CD8-positive, alpha-beta T cell (primary cell): ENCODE measurements at regions of chr20 and their contacts with region 1.

Region 1: DNA sequence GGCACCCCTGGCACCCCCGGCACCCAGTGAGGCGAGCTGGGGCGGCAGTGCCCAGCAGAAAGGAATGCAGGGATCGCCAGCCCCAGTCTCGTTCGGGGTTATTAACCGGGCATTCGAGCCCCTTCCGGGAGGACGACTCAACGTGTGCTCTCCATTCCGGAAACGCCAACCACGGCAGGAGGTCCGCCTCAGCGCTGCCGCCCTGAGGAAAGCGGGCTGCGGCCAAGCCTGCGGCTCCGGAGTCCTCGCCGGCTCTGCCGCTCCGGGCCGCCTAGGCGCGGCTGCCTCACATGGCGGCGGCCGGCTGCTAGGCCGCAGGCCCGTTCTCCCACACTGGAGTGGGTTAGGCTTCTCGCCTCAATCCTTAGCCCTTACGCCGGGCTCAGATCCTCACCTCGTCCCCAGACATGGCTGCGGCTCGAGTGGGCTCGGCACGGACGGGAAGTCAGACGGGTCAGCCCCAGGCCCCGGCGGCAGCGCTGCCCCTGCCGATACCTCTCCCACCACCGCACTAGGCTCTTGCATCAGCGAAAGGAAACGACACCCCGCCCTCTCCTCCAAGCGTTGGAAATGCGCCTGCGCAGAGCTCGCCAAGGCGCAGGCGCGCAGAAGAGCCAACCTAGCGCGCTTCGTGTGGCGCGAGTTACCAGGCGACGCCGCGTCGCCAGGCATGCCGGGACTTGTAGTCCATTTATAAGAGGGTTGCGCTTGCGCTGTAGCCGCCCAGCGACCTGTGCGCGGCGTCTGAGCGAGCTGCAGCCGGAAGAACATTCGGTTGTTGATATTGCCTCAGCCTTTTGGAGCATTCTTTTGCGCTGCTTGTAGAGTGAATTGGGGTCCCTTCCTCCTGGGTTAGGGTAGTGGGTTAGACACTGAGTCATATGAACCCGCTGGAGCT is at the start of gene EIF2S2:
- DNase-seq: peak; percentile 91 to 99 (median 95)
- ATAC-seq: peak; percentile 89
- H3K4me3 ChIP-seq: peak within 1 kb of the TSS; percentile 81 to 86
- H3K4me3 Mint-ChIP-seq: peak within 1 kb of the TSS; percentile 96
- H3K27ac ChIP-seq: peak within 1 kb of the TSS; percentile 89 to 93
- H3K27ac Mint-ChIP-seq: peak within 1 kb of the TSS; percentile 98
- H3K4me1 ChIP-seq: peaks cover 34% of the 10 kb centered on the region
- H3K4me1 Mint-ChIP-seq: peaks cover 42% of the 10 kb centered on the region
- H3K27me3 ChIP-seq: no peaks in the 10 kb centered on the region
- H3K27me3 Mint-ChIP-seq: no peaks in the 10 kb centered on the region
- CTCF ChIP-seq: no peak
- total RNA-seq, gene EIF2S2: 19.4 to 19.6 TPM

Region 2: GRCh38 chr20:32972181-32973076 is 1139.5 kb before region 1 on chr20:
- CTCF ChIA-PET with region 1: no interaction called
- POLR2A ChIA-PET with region 1: no interaction called
- intact Hi-C with region 1: loop called in 1 of 2 experiments (anchors 5 kb)
- DNase-seq: peak; percentile 66 to 97 (median 83)
- ATAC-seq: peak; percentile 69
- H3K4me3 ChIP-seq: peak overlapping the region; percentile 12 to 42
- H3K4me3 Mint-ChIP-seq: no peak overlapping the region
- H3K27ac ChIP-seq: peak overlapping the region; percentile 73 to 95
- H3K27ac Mint-ChIP-seq: no peak overlapping the region
- H3K4me1 ChIP-seq: peaks cover 87% of the 10 kb centered on the region
- H3K4me1 Mint-ChIP-seq: peaks cover 45% of the 10 kb centered on the region
- H3K27me3 ChIP-seq: no peaks in the 10 kb centered on the region
- H3K27me3 Mint-ChIP-seq: no peaks in the 10 kb centered on the region
- CTCF ChIP-seq: no peak

Region 3: DNA sequence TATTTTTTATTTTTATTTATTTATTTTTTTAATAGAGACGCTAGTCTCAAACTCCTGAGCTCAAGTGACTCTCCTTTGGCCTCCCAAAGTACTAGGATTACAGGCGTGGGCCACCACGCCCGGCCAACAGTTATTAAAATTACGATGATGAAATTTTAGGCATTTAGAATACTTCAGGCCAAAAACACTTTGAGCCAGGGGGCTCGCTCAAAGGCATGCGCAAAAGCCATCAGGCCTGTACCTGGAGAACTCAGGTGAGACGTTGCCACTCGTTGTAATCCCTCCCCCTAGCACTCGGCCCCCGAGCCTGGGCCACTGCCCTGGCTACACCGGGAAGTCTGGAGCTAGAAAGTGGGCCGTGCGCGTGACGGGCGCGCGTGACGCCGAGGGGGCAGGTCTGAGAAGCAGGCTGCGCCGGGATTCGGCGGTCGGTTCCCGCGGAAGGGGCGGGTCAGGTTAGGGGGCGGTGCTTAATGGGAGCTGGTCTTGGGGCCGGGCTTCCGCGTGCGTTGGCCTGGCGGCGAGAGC is 622.4 kb before region 1 on chr20:
- CTCF ChIA-PET with region 1: no interaction called
- POLR2A ChIA-PET with region 1: interaction called, 7 read pairs
- intact Hi-C with region 1: loop called (anchors 5 kb)
- DNase-seq: peak; percentile 98 to 99 (median 99)
- ATAC-seq: peak; percentile 94
- H3K4me3 ChIP-seq: peak overlapping the region; percentile 58 to 89
- H3K4me3 Mint-ChIP-seq: peak overlapping the region; percentile 89
- H3K27ac ChIP-seq: peak overlapping the region; percentile 96 to 97
- H3K27ac Mint-ChIP-seq: peak overlapping the region; percentile 96
- H3K4me1 ChIP-seq: peaks cover 11% of the 10 kb centered on the region
- H3K4me1 Mint-ChIP-seq: peaks cover 19% of the 10 kb centered on the region
- H3K27me3 ChIP-seq: no peaks in the 10 kb centered on the region
- H3K27me3 Mint-ChIP-seq: no peaks in the 10 kb centered on the region
- CTCF ChIP-seq: no peak

Region 4: GRCh38 chr20:33719989-33720709 is 391.8 kb before region 1 on chr20 and contains the start of gene PXMP4:
- CTCF ChIA-PET with region 1: no interaction called
- POLR2A ChIA-PET with region 1: interaction called, 3 read pairs
- intact Hi-C with region 1: loop called in 1 of 2 experiments (anchors 1 kb)
- DNase-seq: peak; percentile 71 to 97 (median 84)
- ATAC-seq: peak; percentile 94
- H3K4me3 ChIP-seq: peak within 1 kb of the TSS; percentile 72 to 95
- H3K4me3 Mint-ChIP-seq: peak within 1 kb of the TSS; percentile 86
- H3K27ac ChIP-seq: peak within 1 kb of the TSS; percentile 68 to 78
- H3K27ac Mint-ChIP-seq: peak within 1 kb of the TSS; percentile 91
- H3K4me1 ChIP-seq: peaks cover 16% of the 10 kb centered on the region
- H3K4me1 Mint-ChIP-seq: peaks cover 29% of the 10 kb centered on the region
- H3K27me3 ChIP-seq: no peaks in the 10 kb centered on the region
- H3K27me3 Mint-ChIP-seq: no peaks in the 10 kb centered on the region
- CTCF ChIP-seq: no peak
- total RNA-seq, gene PXMP4: 2.7 to 2.8 TPM